Dendritic cell treated with granulocyte-macrophage colony-stimulating factor and Interleukin-4, amounts not matched to agents 40 ng/mL and 50 ng/mL, for 4 days (primary cell): ENCODE measurements at regions of chr14 and their contacts with region 1.

Region 1: GRCh38 chr14:69712599-69713088 is 54.3 kb upstream of the SRSF5 start:
- H3K4me3 Mint-ChIP-seq: peak overlapping the region; percentile 17
- H3K27ac Mint-ChIP-seq: peak overlapping the region; percentile 88
- H3K4me1 Mint-ChIP-seq: peaks cover 92% of the 10 kb centered on the region
- H3K27me3 Mint-ChIP-seq: no peaks in the 10 kb centered on the region

Region 2: GRCh38 chr14:68627880-68628607 is 1084.6 kb before region 1 on chr14:
- intact Hi-C with region 1: no loop called
- H3K4me3 Mint-ChIP-seq: peak overlapping the region; percentile 54
- H3K27ac Mint-ChIP-seq: peak overlapping the region; percentile 63
- H3K4me1 Mint-ChIP-seq: peaks cover 60% of the 10 kb centered on the region
- H3K27me3 Mint-ChIP-seq: peaks cover 35% of the 10 kb centered on the region

Region 3: DNA sequence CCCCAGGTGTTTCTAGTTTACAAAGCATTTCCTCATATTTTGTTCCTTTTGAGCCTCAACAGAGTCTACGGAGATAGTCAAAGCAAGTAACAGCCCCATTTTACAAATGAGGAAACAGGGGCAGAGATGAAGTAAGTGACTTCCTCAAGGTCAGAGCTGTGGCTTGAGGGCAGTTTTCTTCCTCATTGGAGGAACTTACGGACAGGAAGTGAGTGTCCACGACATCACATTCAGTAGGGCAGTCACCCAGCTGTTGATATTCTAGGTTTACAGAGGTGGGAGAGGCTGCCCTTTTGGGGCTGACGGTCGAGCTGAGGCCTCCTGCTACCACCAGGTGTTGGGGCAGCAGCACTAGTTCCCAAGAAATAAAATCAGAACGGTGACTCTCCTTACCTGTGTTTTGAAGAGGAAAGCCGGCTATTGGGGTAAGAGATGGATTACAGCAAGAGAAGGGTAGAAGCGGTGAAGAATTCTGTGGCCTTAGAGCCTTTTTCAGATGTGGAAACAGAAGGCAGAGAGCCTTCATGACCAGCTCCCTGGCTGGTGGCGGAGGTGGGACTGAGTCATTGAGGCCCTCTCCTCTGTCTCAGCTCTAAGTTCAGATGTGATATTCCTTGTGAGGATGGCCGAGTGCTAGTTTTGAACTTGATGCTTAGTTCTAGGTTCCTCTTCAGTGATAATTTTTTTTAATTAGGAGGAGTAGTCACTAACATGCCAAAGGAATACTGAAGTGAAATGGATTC is 59.5 kb before region 1 on chr14:
- intact Hi-C with region 1: loop called (anchors 5 kb)
- H3K4me3 Mint-ChIP-seq: peak overlapping the region; percentile 64
- H3K27ac Mint-ChIP-seq: peak overlapping the region; percentile 97
- H3K4me1 Mint-ChIP-seq: peaks cover 96% of the 10 kb centered on the region
- H3K27me3 Mint-ChIP-seq: no peaks in the 10 kb centered on the region